ENCODE measurements at regions of chr3 and their contacts with region 1.

Region 1: DNA sequence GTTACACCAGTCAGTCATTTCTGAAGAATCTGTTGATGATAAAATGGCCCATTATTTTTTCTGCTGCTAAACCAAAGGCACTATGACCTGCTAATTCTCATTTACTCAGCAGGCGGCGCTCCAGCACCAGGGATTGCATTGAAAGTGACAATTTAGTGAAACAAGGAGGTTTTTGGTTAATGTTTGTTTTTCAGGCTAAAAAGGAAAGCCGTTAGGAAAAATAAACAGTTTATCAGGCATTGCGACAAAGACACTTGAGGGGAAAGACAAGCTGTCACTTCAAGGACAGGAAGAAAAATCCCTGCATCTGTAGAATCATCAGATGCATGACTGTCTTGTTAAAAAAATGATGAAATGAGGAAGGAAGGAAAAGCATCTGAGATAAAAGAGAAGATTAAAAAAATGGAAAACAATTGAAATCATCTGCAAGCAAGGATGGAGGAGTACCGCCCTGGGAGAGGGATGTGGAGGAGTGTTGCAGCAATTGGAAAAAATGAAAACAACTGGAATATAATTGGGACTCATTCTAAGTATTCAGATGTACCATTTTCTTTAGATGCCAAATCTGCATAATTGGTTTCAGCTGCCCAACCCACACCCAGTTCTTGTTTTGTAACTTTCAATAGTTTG is 54.0 kb downstream of the NR1D2 start:
- DNase-seq: peak; percentile 52
- H3K4me3 ChIP-seq: peak overlapping the region in 1 of 2 experiments; percentile 9; a peak in 1 of 4 replicates
- H3K27ac ChIP-seq: no peak overlapping the region; a peak in 2 of 4 replicates
- H3K4me1 ChIP-seq: peaks cover 0 to 19% of the 10 kb centered on the region in 2 experiments; a peak in 3 of 4 replicates
- H3K27me3 ChIP-seq: no peaks in the 10 kb centered on the region
- CTCF ChIP-seq: peak; percentile 98
- EP300 ChIP-seq: peak in 1 of 2 experiments; percentile 17; a peak in 1 of 4 replicates
- RAD21 ChIP-seq: peak; percentile 100

Region 2: GRCh38 chr3:23888617-23889228 is 110.4 kb before region 1 on chr3:
- CTCF ChIA-PET with region 1: interaction called, 20 read pairs
- POLR2A ChIA-PET with region 1: no interaction called
- DNase-seq: no peak
- H3K4me3 ChIP-seq: no peak overlapping the region; a peak in 1 of 4 replicates
- H3K27ac ChIP-seq: no peak overlapping the region; a peak in 1 of 4 replicates
- H3K4me1 ChIP-seq: no peaks in the 10 kb centered on the region; a peak in 2 of 4 replicates
- H3K27me3 ChIP-seq: no peaks in the 10 kb centered on the region
- CTCF ChIP-seq: peak; percentile 93
- EP300 ChIP-seq: no peak
- RAD21 ChIP-seq: peak; percentile 73

Region 3: DNA sequence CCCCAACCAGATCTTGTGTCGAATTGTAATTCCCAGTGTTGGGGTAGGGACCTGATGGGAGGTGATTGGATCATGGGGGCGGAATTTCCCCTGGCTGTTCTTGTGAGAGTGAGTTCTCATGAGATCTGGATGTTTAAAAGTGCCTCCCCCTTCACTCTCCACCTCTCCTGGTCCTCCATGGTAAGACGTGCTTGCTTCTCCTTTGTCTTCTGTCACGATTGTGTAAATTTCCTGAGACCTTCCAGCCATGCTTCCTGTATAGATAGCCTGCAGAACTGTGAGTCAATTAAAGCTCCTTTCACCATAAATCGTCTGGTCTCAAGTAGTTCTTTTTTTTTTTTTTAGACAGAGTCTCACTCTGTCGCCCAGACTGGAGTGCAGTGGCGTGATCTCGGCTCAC is 11.8 kb before region 1 on chr3:
- CTCF ChIA-PET with region 1: no interaction called
- POLR2A ChIA-PET with region 1: no interaction called
- DNase-seq: no peak
- H3K4me3 ChIP-seq: no peak overlapping the region
- H3K27ac ChIP-seq: no peak overlapping the region
- H3K4me1 ChIP-seq: peaks cover 19 to 25% of the 10 kb centered on the region in 2 experiments
- H3K27me3 ChIP-seq: no peaks in the 10 kb centered on the region
- CTCF ChIP-seq: no peak
- EP300 ChIP-seq: no peak
- RAD21 ChIP-seq: no peak

Region 4: DNA sequence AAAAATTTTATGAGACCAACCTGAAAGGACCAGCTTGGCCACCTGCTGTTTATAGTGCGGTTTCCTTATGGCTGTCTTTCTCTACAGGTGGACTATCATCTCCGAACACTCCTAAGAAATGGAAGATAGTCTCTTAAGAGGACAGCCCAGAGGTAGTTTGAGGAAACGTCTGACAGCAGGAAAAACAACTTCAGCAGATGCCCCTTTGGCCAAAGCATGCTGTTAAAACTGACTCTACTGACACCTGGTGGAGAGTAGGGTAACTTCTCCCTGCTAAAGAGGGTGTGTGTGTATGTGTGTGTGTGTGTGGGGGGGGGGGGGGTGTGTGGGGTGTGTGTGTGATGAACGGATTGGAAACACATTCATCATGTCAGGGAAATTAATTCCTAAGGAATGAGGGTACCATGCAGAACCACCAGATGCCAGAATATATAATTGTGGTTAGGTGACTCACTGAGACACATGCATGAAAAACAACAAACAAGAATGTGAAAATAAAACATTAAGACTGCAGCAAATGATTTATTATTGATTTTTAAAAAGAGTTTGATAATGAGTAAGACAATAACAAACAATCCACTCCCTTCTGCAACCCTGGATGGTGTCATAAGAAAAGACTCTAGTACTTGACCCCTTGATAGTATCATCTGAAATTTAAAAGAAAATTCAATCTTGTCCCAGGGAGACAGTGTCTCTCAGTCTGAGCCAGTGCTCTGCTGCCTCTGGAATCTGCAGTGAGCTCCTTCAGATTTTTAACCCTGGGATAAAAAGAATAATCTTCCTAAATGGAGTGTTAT is 239.0 kb after region 1 on chr3:
- CTCF ChIA-PET with region 1: interaction called, 38 read pairs
- POLR2A ChIA-PET with region 1: no interaction called
- DNase-seq: peak; percentile 61
- H3K4me3 ChIP-seq: 0 out of 4 replicates have a peak overlapping the region, but pooled peaks of 1 of the 2 experiments have one; percentile 36
- H3K27ac ChIP-seq: peak overlapping the region; percentile 47 to 69; a peak in 3 of 4 replicates
- H3K4me1 ChIP-seq: peaks cover 0 to 18% of the 10 kb centered on the region in 2 experiments; a peak in 2 of 4 replicates
- H3K27me3 ChIP-seq: no peaks in the 10 kb centered on the region
- CTCF ChIP-seq: peak; percentile 71
- EP300 ChIP-seq: peak; percentile 58 to 91
- RAD21 ChIP-seq: peak; percentile 90

Region 5: DNA sequence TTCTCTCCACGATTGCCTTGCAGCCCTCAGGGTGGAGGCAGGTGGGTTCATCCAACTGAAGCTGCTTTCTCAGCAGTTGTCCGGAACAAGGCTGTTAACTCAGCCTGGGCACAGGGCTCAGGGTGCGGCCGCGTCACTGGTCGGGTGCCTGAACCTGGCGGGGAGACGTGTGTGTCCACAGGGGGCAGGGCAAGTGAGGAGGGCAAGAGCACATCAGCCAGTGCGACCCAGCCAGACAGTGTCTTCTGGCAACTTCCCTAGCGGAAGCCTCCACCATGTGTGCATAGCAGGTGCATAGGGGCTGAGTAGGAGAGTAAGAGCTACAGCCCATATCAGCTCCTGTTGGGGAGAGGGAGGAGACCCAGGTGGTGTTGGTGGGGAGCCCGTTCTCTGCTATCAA is 645.9 kb after region 1 on chr3:
- CTCF ChIA-PET with region 1: interaction called, 15 read pairs
- POLR2A ChIA-PET with region 1: no interaction called
- DNase-seq: no peak
- H3K4me3 ChIP-seq: no peak overlapping the region
- H3K27ac ChIP-seq: no peak overlapping the region
- H3K4me1 ChIP-seq: no peaks in the 10 kb centered on the region
- H3K27me3 ChIP-seq: no peaks in the 10 kb centered on the region
- CTCF ChIP-seq: no peak
- EP300 ChIP-seq: no peak
- RAD21 ChIP-seq: no peak

Region 6: DNA sequence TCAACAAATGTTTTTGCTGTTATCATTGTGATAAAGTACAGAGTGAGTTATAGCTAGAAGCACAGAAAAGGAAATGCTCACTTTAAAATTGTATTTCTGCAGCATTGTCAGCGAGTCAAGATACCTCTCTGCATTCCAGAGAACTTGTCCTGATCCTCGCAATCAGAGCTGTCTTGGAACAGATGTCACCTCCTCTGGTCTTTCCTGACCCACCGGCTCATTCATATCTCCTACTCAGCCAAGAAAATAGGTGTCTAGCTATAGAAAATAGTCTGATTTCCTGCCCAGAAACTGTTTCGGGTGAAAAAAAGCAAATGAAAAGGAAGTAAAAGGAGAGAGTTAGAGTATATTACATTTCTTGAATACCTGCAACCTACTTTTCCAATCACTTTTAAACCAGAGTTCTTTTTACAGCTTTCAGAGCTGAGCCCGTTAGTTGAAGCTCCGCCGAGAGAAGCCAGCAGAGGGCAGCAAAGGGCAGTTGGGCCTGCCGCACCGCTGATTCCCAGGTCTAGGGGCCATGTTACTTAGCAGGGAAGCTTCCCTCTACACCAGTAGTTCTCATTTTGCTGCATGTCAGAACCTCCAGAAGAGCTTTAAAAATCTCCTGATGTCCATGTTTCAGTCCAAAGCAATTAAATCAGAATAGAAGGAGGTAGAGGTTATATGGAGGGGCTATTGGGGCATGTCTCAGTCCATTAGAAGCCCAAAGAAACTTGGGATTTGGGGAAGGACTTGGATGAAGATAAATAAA is 681.3 kb after region 1 on chr3:
- CTCF ChIA-PET with region 1: interaction called, 15 read pairs
- POLR2A ChIA-PET with region 1: no interaction called
- DNase-seq: peak; percentile 59
- H3K4me3 ChIP-seq: no peak overlapping the region; a peak in 1 of 4 replicates
- H3K27ac ChIP-seq: no peak overlapping the region
- H3K4me1 ChIP-seq: no peaks in the 10 kb centered on the region; a peak in 1 of 4 replicates
- H3K27me3 ChIP-seq: no peaks in the 10 kb centered on the region
- CTCF ChIP-seq: peak; percentile 85
- EP300 ChIP-seq: no peak
- RAD21 ChIP-seq: peak; percentile 66

Measured in SK-N-SH (cell line).